ENCODE measurements at regions of chr18 and their contacts with region 1.

Region 1: DNA sequence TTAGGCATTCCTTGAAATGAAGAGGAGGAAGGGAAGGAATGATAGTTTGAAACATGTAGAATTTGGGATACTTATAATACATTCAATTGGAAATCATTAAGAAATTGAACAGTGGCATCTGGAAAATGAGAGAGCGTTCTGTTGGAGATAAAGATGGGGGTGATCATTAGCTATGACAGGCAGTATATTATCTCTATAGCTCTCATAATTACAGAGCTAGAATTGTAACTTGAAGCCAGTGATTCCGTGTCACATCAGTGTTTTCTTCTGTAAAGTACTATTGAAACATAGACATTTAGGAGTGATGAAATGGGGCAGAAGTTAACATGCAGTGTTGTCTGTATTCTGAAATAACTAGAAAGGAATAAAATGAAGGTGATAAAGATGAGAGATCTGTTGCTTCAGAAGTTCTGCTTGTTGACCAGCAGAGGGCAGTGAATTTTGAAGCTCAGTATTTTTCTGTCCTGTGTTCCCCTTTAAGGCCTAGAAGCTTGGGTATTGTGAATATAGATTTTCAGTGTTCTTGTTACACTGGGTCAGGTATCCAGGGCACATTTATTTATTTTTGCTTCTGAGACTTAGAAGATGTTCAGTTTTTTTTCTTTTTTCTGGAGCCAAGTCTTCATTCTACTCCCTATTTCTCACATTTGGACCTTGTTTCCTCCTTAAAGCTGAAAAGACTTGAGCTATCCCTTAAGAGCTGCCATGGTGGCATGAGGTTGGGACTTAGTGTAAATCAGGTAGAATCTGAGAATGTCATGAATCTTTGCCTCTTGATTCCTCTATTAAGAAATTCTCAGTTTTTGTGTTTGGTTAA is 157.4 kb downstream of the TAF4B start:
- DNase-seq: no peak
- H3K4me3 ChIP-seq: no peak overlapping the region
- CTCF ChIP-seq: peak; percentile 58

Region 2: GRCh38 chr18:26322890-26323653 is 60.6 kb before region 1 on chr18:
- CTCF ChIA-PET with region 1: interaction called, 12 read pairs
- POLR2A ChIA-PET with region 1: no interaction called
- DNase-seq: no peak
- H3K4me3 ChIP-seq: no peak overlapping the region
- CTCF ChIP-seq: no peak

Region 3: DNA sequence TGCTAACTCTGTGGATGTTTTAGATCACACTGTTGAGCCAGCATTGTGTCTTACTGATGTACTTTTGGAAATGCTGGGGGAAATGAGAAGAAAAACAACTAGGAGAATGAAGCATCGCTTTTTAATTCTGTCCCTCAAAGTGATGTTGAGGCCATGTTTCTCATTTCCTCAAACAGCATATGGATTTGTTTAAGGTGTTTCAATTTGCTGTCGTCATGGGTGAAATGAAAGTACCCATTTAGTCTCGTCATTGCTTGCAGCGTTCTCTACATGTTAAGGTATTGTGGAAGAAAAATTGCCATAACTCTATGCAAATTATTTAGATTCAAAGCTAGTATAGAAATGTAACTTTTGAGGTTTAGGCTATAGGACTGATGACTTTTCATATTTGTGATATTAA is 13.4 kb after region 1 on chr18:
- CTCF ChIA-PET with region 1: interaction called, 11 read pairs
- POLR2A ChIA-PET with region 1: no interaction called
- DNase-seq: no peak
- H3K4me3 ChIP-seq: no peak overlapping the region
- CTCF ChIP-seq: no peak

Region 4: GRCh38 chr18:26568926-26569665 is 185.4 kb after region 1 on chr18:
- CTCF ChIA-PET with region 1: interaction called, 10 read pairs
- POLR2A ChIA-PET with region 1: no interaction called
- DNase-seq: no peak
- H3K4me3 ChIP-seq: no peak overlapping the region
- CTCF ChIP-seq: no peak

Region 5: DNA sequence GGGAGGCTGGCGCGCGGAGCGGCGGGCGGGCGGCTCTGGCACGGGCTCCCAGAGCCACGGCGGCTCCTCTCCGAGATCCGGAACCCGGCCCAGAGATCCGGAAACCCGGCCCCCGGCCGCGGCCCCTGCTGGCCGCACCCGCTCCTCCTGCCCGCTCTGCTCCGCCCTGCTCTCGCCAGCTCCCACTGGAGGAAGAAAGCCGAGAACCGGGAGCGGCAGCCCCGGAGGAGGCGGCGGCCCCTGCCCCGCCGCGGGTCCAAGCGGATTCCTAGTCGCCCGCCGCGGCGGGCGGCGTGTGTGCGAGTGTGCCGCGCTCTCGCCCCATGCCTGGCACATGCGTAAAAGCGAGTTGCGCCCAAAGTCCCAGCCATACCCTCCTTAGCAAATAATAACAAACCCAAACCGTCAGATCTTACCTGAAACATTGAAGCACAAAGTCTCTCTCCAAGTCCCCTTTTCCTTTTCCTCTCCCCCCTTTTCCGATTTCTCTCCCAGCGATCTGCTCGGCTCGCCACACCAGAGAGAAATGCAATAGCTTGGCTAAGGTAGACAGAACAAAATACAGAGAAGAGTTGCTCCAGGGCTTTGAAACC is 273.4 kb after region 1 on chr18:
- CTCF ChIA-PET with region 1: interaction called, 14 read pairs
- POLR2A ChIA-PET with region 1: no interaction called
- DNase-seq: no peak
- H3K4me3 ChIP-seq: peak overlapping the region; percentile 60
- CTCF ChIP-seq: peak; percentile 52

Measured in AG04449 (cell line).